Posterior vena cava (tissue), 2 donors: ENCODE measurements at regions of chr13 and their contacts with region 1.

Region 1: GRCh38 chr13:46721054-46721453 is 75.9 kb downstream of the ESD start:
- DNase-seq: no peak

Region 2: DNA sequence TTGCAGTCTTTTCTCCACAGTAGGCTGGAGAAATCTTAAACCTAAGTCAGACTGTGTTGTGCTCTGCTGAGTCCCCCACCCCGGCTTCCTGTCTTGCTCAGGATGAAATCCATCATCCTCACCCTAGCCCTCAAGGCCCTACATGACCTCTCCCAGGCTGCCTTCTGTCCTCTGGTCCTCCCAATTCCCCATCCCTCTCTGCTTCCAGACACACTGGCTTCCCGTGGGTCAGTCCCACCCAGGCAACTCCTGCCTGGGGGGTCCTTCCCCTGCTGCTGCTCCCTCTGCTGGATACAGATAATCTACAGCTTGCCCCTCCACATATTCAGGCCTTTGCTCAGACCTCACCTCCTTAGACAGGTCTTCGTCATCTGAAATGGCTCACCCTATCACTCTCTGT is 1037.4 kb before region 1 on chr13:
- intact Hi-C with region 1: no loop called
- DNase-seq: no peak

Region 3: DNA sequence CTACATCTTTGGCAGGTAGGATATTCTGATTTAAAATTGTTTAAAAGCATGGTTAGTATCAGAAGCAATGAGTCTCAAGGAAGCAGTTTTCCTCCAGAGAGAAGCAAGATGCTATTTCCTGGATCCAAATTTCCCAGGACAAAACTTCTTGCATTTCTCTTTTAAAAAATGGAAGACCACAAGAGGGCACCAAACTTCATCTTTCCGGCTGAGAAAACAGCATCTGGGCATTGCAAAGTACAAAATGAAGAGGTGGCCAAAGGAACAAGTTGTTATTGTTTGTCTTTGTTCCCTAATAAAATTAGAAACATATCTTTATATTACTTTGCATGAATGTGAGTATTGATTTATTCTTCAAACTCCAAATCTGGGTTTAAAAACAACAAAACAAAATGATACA is 228.1 kb before region 1 on chr13:
- intact Hi-C with region 1: loop called (anchors 5 to 10 kb)
- DNase-seq: no peak